ENCODE measurements at regions of chr14 and their contacts with region 1.

Region 1: DNA sequence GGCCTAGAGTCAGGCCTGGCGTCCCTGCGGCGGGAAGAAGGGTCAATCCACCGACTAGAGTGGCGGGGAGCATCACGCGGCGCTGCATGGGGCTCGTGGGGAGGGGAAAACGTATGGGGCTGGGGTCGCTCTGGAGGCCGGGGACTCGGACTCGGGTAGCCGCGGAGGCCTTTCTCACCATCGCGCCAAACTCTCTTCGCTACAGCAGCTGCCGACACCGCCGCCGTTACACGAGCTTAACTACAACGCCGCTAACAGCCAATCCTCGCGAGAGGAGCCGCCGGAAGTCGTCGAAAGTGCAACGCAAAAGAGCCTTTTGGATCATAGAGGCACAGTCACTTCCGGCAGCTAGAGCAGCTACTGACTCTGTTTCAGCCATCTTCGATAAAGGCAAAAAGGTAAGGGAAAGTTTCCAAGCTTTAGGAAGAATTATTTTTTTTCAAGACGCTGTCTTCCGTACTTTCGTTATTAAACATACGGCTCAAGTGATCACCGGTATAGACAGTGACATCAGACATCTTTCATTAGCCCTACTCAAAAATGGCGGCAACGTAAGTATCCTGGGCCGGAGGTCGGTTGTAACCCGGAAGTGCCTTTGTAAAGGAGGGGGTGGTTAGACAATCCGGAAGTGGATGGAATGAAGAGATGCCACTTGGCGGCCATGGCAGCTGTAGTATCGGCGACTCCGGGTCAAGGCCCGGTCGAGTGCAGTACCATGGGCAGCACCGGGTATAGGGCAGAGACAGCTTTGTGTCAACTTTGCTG is at the starts of genes ERH and SLC39A9:
- DNase-seq: peak; percentile 96 to 98 (median 97)
- H3K4me3 ChIP-seq: peak within 1 kb of the TSS; percentile 66 to 99 (median 99)
- H3K4me3 Mint-ChIP-seq: peak within 1 kb of the TSS; percentile 92 to 96
- H3K27ac ChIP-seq: peak within 1 kb of the TSS; percentile 69 to 99
- H3K27ac Mint-ChIP-seq: peak within 1 kb of the TSS; percentile 97 to 99 (median 99)
- H3K4me1 ChIP-seq: peaks cover 35 to 48% of the 10 kb centered on the region in 2 donors
- H3K4me1 Mint-ChIP-seq: peaks cover 51% of the 10 kb centered on the region
- H3K27me3 ChIP-seq: no peaks in the 10 kb centered on the region
- H3K27me3 Mint-ChIP-seq: no peaks in the 10 kb centered on the region
- CTCF ChIP-seq: no peak
- polyA plus RNA-seq, gene ERH: 63.6 to 67.0 (median 64.3) TPM
- polyA plus RNA-seq, gene SLC39A9: 28.6 to 44.2 (median 37.6) TPM

Region 2: DNA sequence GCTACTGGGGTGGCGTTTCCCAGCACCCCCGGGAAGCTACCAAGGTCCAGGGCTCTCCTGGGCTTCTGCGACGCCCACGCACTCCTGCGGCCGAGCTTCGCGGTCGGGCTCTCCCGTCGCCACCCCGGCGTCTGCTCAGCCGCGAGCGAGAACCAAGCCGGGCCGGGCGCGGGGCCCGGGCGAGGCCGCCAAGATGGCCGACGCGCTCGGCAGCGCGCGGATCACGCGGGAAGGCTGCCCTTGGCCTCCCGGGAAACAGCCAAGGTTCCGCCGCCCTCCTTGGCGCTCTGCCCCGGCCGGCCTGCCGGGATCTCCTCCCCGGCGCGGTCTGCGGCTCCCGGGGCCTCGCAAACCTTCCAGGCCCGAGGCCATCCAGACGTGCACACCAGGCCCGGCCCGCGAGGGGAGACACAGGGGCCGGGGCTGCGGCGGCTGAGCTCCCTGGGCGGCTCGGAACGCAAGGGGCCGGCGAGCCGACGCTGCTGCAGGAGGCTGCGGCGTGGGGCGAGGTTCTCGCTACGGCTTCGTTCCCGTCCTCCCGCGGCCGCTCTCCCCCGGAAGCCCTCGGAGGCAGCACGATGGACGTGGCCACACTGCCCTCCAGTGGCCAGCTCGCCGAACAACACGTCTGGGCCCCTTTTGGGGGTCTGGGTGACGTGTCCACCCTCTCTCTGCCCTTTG is 581.8 kb before region 1 on chr14:
- intact Hi-C with region 1: no loop called
- DNase-seq: peak; percentile 86 to 90 (median 88)
- H3K4me3 ChIP-seq: peak overlapping the region; percentile 13 to 62 (median 42)
- H3K4me3 Mint-ChIP-seq: peak overlapping the region; percentile 64 to 69
- H3K27ac ChIP-seq: peak overlapping the region; percentile 84 to 93
- H3K27ac Mint-ChIP-seq: peak overlapping the region; percentile 80 to 94 (median 84)
- H3K4me1 ChIP-seq: peaks cover 31 to 39% of the 10 kb centered on the region in 2 donors
- H3K4me1 Mint-ChIP-seq: peaks cover 37% of the 10 kb centered on the region
- H3K27me3 ChIP-seq: no peaks in the 10 kb centered on the region
- H3K27me3 Mint-ChIP-seq: peaks cover 3 to 5% (median 3%) of the 10 kb centered on the region in 3 donors
- CTCF ChIP-seq: peak; percentile 99

Region 3: DNA sequence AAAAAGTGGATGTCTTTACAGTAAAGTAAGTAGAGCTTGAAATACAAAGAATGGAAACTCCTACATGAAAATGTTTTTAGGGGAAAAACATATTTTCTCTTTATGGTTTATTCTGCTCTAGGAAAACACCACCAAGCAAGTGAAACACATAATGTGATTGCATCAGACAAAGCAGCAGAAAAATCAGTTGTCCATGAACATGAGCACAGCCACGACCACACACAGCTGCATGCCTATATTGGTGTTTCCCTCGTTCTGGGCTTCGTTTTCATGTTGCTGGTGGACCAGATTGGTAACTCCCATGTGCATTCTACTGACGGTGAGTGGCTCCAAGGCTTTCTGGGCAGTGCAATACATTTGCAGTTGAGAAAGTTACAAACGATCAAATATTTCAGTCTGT is 43.7 kb after region 1 on chr14:
- intact Hi-C with region 1: no loop called
- DNase-seq: no peak
- H3K4me3 ChIP-seq: no peak overlapping the region
- H3K4me3 Mint-ChIP-seq: no peak overlapping the region
- H3K27ac ChIP-seq: no peak overlapping the region
- H3K27ac Mint-ChIP-seq: no peak overlapping the region
- H3K4me1 ChIP-seq: peaks cover 14 to 15% of the 10 kb centered on the region in 2 donors
- H3K4me1 Mint-ChIP-seq: peaks cover 20% of the 10 kb centered on the region
- H3K27me3 ChIP-seq: no peaks in the 10 kb centered on the region
- H3K27me3 Mint-ChIP-seq: no peaks in the 10 kb centered on the region
- CTCF ChIP-seq: no peak

Region 4: GRCh38 chr14:69574263-69574953 is 176.2 kb after region 1 on chr14 and contains the start of gene CCDC177:
- intact Hi-C with region 1: no loop called
- DNase-seq: peak; percentile 36 to 44 (median 42)
- H3K4me3 ChIP-seq: no peak within 1 kb of the TSS
- H3K4me3 Mint-ChIP-seq: peak within 1 kb of the TSS; percentile 37 to 86
- H3K27ac ChIP-seq: no peak within 1 kb of the TSS
- H3K27ac Mint-ChIP-seq: peak within 1 kb of the TSS in 3 of 7 donors; percentile 17 to 73 (median 52)
- H3K4me1 ChIP-seq: peaks cover 3 to 13% of the 10 kb centered on the region in 2 donors
- H3K4me1 Mint-ChIP-seq: peaks cover 13% of the 10 kb centered on the region
- H3K27me3 ChIP-seq: peaks cover 21 to 75% of the 10 kb centered on the region in 2 donors
- H3K27me3 Mint-ChIP-seq: peaks cover 72 to 92% (median 81%) of the 10 kb centered on the region in 3 donors
- CTCF ChIP-seq: peak; percentile 92
- polyA plus RNA-seq, gene CCDC177: not detected

Region 5: GRCh38 chr14:69766984-69767368 is 368.7 kb after region 1 on chr14 and contains the start of gene SRSF5:
- intact Hi-C with region 1: loop called in 1 of 2 experiments (anchors 5 kb)
- DNase-seq: peak; percentile 99
- H3K4me3 ChIP-seq: peak within 1 kb of the TSS; percentile 62 to 100 (median 83)
- H3K4me3 Mint-ChIP-seq: peak within 1 kb of the TSS; percentile 97 to 98
- H3K27ac ChIP-seq: peak within 1 kb of the TSS; percentile 98 to 100
- H3K27ac Mint-ChIP-seq: peak within 1 kb of the TSS; percentile 99 to 100 (median 100)
- H3K4me1 ChIP-seq: peaks cover 18 to 28% of the 10 kb centered on the region in 2 donors
- H3K4me1 Mint-ChIP-seq: peaks cover 35% of the 10 kb centered on the region
- H3K27me3 ChIP-seq: no peaks in the 10 kb centered on the region
- H3K27me3 Mint-ChIP-seq: no peaks in the 10 kb centered on the region
- CTCF ChIP-seq: no peak
- polyA plus RNA-seq, gene SRSF5: 410 to 554 (median 502) TPM